ENCODE measurements at regions of chr4 and their contacts with region 1.

Region 1: DNA sequence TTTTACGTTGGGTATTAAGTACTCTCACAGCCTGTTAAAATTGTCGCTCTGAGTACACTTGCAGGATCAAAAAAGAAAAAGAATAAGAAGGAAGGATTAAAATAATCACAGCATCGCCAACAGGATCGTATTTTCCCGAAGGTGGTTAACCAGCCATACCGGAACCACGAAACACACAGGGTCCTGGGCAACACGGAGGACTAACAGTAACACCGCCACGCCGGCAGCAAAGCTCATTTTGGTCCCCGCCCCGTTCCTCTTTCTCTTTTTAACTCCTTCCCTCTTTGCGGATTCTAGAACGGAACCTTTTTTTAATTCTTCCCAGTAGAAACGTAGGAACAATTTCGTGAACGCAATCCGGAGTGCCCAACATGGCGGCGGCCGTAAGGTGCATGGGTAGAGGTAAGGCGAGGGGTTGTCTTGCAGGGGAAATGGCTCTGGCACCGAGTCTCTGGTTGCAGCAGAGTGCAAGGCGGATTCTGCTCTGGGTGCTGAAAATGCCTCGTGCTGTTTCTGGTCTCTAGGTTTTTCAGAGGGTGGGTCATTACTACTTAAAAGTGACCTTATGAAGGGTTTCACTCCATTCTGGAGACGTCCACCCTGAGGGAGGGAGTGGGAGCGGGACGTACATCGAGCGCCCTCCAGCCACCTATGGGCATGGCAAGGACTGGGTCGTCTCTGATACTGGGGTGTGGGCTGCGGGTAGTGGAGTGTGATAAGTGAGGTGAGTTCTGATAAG is at the start of gene MRPL1:
- DNase-seq: peak; percentile 96
- H3K4me3 Mint-ChIP-seq: peak within 1 kb of the TSS; percentile 90
- H3K27ac Mint-ChIP-seq: peak within 1 kb of the TSS; percentile 99
- H3K4me1 Mint-ChIP-seq: peaks cover 15% of the 10 kb centered on the region
- H3K27me3 Mint-ChIP-seq: no peaks in the 10 kb centered on the region
- CTCF ChIP-seq: no peak
- total RNA-seq, gene MRPL1: 36.8 and 53.3 TPM in 2 replicates

Region 2: DNA sequence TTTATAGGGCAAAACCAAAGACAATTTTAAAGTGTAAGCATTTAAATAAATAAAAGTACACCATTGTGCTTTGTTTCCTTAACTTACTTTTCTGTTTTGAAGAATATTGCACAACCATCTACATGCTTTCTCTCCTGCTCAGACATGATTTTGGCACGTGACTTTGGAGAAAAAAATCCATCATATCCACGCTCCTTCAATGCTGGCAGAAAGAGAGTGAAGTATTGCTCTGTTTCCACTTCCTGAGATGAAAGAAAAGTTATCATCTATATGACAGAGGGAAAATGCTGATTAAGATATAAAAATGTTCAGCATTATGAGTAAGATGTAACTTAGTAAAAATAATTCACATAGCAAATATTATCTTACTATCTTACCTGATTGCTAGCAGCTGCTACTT is 120.6 kb before region 1 on chr4:
- CTCF ChIA-PET with region 1: interaction called, 3 read pairs
- POLR2A ChIA-PET with region 1: interaction called, 10 read pairs
- intact Hi-C with region 1: no loop called
- DNase-seq: peak; percentile 45
- H3K4me3 Mint-ChIP-seq: no peak overlapping the region
- H3K27ac Mint-ChIP-seq: peak overlapping the region; percentile 32
- H3K4me1 Mint-ChIP-seq: peaks cover 13% of the 10 kb centered on the region
- H3K27me3 Mint-ChIP-seq: no peaks in the 10 kb centered on the region
- CTCF ChIP-seq: no peak

Region 3: GRCh38 chr4:77827343-77827742 is 35.3 kb before region 1 on chr4:
- CTCF ChIA-PET with region 1: interaction called, 5 read pairs
- POLR2A ChIA-PET with region 1: interaction called, 58 read pairs
- intact Hi-C with region 1: no loop called
- DNase-seq: no peak
- H3K4me3 Mint-ChIP-seq: no peak overlapping the region
- H3K27ac Mint-ChIP-seq: no peak overlapping the region
- H3K4me1 Mint-ChIP-seq: no peaks in the 10 kb centered on the region
- H3K27me3 Mint-ChIP-seq: no peaks in the 10 kb centered on the region
- CTCF ChIP-seq: no peak

Region 4: DNA sequence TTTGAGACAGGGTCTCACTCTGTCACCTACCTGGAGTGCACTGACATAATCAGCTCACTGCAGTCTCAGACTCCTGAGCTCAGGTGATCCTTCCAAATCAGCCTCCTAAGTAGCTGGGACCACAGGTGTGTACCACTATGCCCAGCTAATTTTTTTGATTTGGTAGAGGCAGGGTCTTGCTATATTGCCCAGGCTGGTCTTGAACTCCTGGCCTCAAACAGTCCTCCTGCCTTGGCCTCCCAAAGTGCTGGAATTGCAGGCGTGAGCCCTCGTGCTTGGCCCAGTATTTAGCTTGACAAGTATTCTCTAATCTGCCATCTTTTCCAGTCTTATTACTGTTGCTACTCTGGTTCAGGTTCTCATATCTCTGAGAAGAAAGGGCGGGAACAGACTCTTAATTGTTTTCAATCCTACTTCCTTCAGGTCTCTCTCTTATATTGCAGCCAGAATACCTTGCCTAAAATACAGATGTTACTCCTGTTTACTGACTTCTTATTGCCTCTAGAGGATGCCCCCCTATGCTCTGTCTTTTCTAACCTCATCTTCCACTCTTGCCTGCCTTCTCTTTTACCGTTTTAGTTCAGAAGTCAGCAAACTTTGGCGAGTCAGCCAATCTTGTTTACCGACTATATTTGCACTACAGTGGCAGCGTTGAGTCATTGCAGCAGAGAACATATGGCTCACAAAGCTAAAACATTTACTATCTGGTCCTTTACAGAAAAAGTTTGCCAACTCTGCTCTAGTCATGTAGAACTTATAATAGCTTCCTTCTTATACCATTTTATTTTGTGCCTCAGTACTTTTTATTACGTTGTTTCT is 19.0 kb after region 1 on chr4:
- CTCF ChIA-PET with region 1: interaction called, 4 read pairs
- POLR2A ChIA-PET with region 1: interaction called, 80 read pairs
- intact Hi-C with region 1: no loop called
- DNase-seq: peak; percentile 48
- H3K4me3 Mint-ChIP-seq: peak overlapping the region; percentile 26
- H3K27ac Mint-ChIP-seq: peak overlapping the region; percentile 87
- H3K4me1 Mint-ChIP-seq: peaks cover 22% of the 10 kb centered on the region
- H3K27me3 Mint-ChIP-seq: no peaks in the 10 kb centered on the region
- CTCF ChIP-seq: peak; percentile 7

Region 5: GRCh38 chr4:77927991-77928925 is 65.6 kb after region 1 on chr4:
- CTCF ChIA-PET with region 1: interaction called, 3 read pairs
- POLR2A ChIA-PET with region 1: interaction called, 49 read pairs
- intact Hi-C with region 1: loop called (anchors 2 kb)
- DNase-seq: peak; percentile 92
- H3K4me3 Mint-ChIP-seq: no peak overlapping the region
- H3K27ac Mint-ChIP-seq: peak overlapping the region; percentile 73
- H3K4me1 Mint-ChIP-seq: peaks cover 27% of the 10 kb centered on the region
- H3K27me3 Mint-ChIP-seq: no peaks in the 10 kb centered on the region
- CTCF ChIP-seq: no peak

Measured in MCF 10A (cell line).